Breast epithelium (tissue), 4 donors: ENCODE measurements at regions of chr12 and their contacts with region 1.

Region 1: GRCh38 chr12:71045781-71046180 is 112.0 kb downstream of the TSPAN8 start:
- DNase-seq: no peak
- H3K4me3 ChIP-seq: no peak overlapping the region
- H3K27ac ChIP-seq: peak overlapping the region; percentile 48 to 80
- H3K4me1 ChIP-seq: no peaks in the 10 kb centered on the region
- H3K27me3 ChIP-seq: no peaks in the 10 kb centered on the region
- CTCF ChIP-seq: no peak
- POLR2A ChIP-seq: no peak

Region 2: DNA sequence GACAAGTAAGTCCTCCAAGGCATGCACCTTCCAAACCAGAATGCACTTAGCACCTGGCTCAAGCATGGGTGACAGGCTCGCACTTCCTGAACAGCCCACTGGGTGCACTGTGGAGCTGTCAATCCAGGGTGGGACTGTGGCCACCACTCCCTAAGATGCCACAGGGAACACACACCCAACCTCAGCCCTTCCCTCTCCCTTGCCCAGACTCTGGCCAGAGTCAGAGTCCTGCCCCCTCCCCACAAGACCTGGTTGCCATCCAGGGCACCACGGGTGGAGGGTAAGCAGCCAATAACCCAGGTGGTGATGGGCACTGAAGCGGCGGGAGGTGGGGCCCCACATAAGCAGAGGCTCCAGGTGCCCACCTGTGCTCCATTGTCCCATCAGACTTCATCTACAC is 1060.1 kb before region 1 on chr12:
- intact Hi-C with region 1: no loop called
- DNase-seq: no peak
- H3K4me3 ChIP-seq: no peak overlapping the region
- H3K27ac ChIP-seq: no peak overlapping the region
- H3K4me1 ChIP-seq: no peaks in the 10 kb centered on the region
- H3K27me3 ChIP-seq: no peaks in the 10 kb centered on the region
- CTCF ChIP-seq: no peak
- POLR2A ChIP-seq: no peak

Region 3: GRCh38 chr12:70719672-70720420 is 325.9 kb before region 1 on chr12:
- intact Hi-C with region 1: no loop called
- DNase-seq: no peak
- H3K4me3 ChIP-seq: peak overlapping the region in 2 of 3 donors; percentile 7 to 29
- H3K27ac ChIP-seq: peak overlapping the region in 1 of 2 donors; percentile 45
- H3K4me1 ChIP-seq: no peaks in the 10 kb centered on the region
- H3K27me3 ChIP-seq: no peaks in the 10 kb centered on the region
- CTCF ChIP-seq: peak; percentile 35 to 74 (median 52)
- POLR2A ChIP-seq: no peak

Region 4: DNA sequence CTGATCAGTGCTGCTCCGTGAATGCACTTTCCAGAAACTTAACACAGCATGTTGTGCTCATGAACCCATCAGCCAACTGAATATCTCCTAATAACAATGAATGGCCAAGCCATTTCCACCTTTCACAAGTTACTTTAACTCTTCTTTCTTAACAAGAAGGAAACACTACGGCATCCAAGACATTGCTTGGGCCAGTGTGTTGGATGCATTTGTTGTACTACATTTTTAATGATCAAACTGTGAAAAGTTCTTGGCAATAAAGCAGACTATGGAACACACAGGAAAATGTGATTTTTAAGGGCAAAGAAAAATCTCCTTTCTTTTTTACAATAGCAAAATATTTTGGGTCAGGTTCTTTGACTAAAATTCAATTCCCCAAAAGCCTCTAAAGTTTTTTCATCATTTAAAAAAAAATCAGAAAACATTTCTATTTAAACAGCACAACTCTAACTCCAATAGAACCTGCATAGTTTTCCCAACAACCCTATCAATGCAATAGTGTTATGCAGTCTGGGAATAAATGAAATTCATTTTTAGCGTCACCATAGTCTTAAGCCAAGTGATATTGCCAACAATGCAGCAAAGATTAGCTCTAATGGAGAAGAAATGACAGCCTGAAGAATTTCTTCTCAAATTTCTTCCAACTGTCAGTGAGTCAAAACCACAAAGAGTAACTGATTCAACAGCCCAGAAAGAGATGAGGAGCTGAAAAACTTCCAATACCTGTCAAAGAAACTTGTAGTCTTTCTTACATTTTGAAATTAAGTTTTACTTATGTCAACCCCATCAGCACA is 74.6 kb before region 1 on chr12:
- intact Hi-C with region 1: no loop called
- DNase-seq: no peak
- H3K4me3 ChIP-seq: no peak overlapping the region
- H3K27ac ChIP-seq: no peak overlapping the region
- H3K4me1 ChIP-seq: no peaks in the 10 kb centered on the region
- H3K27me3 ChIP-seq: no peaks in the 10 kb centered on the region
- CTCF ChIP-seq: no peak
- POLR2A ChIP-seq: no peak

Region 5: GRCh38 chr12:71063087-71063486 is 17.3 kb after region 1 on chr12:
- intact Hi-C with region 1: loop called (anchors 1 kb)
- DNase-seq: no peak
- H3K4me3 ChIP-seq: no peak overlapping the region
- H3K27ac ChIP-seq: no peak overlapping the region
- H3K4me1 ChIP-seq: no peaks in the 10 kb centered on the region
- H3K27me3 ChIP-seq: no peaks in the 10 kb centered on the region
- CTCF ChIP-seq: no peak
- POLR2A ChIP-seq: no peak